Endothelial cell of umbilical vein (primary cell): ENCODE measurements at regions of chr20 and their contacts with region 1.

Region 1: GRCh38 chr20:17786221-17786718 is 86.5 kb downstream of the BANF2 start:
- DNase-seq: peak; percentile 91
- H3K4me3 ChIP-seq: no peak overlapping the region
- H3K27ac ChIP-seq: peak overlapping the region; percentile 62
- H3K4me1 ChIP-seq: peaks cover 6% of the 10 kb centered on the region
- H3K27me3 ChIP-seq: peaks cover 0 to 4% of the 10 kb centered on the region in 2 experiments
- CTCF ChIP-seq: no peak
- POLR2A ChIP-seq: no peak

Region 2: DNA sequence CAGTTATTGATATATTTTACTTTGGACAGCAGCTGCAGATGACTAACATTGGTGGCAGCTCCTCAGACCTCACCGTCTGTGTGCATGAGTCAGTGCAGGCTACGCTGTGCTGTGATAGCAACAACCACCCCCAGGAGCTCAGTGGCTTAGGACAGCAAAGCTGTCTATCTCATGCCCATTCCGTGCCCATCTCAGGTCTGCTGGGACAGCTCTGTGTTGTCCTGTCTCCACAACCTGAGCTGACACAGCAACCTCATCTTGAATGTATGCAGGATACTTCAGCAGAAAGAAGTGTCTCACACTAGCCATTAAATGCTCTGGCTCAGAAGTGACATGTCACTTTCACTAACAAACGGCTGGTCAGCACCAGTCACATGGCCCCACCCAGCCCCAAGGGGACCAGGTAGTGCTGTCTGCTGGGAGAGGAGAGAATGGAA is 38.8 kb before region 1 on chr20:
- CTCF ChIA-PET with region 1: no interaction called
- POLR2A ChIA-PET with region 1: no interaction called
- dilution Hi-C with region 1: no loop called
- intact Hi-C with region 1: loop called (anchors 1 kb)
- DNase-seq: peak; percentile 85
- H3K4me3 ChIP-seq: no peak overlapping the region
- H3K27ac ChIP-seq: peak overlapping the region; percentile 43
- H3K4me1 ChIP-seq: peaks cover 24% of the 10 kb centered on the region
- H3K27me3 ChIP-seq: no peaks in the 10 kb centered on the region
- CTCF ChIP-seq: no peak
- POLR2A ChIP-seq: no peak

Region 3: GRCh38 chr20:17849901-17850683 is 63.8 kb after region 1 on chr20:
- CTCF ChIA-PET with region 1: no interaction called
- POLR2A ChIA-PET with region 1: no interaction called
- dilution Hi-C with region 1: no loop called
- intact Hi-C with region 1: loop called (anchors 1 kb)
- DNase-seq: peak; percentile 97
- H3K4me3 ChIP-seq: no peak overlapping the region
- H3K27ac ChIP-seq: peak overlapping the region; percentile 80
- H3K4me1 ChIP-seq: peaks cover 26% of the 10 kb centered on the region
- H3K27me3 ChIP-seq: no peaks in the 10 kb centered on the region
- CTCF ChIP-seq: no peak
- POLR2A ChIP-seq: no peak